Activated CD8-positive, alpha-beta T cell treated with anti-CD3 and anti-CD28 coated beads for 36 hours (primary cell): ENCODE measurements at regions of chr2 and their contacts with region 1.

Region 1: DNA sequence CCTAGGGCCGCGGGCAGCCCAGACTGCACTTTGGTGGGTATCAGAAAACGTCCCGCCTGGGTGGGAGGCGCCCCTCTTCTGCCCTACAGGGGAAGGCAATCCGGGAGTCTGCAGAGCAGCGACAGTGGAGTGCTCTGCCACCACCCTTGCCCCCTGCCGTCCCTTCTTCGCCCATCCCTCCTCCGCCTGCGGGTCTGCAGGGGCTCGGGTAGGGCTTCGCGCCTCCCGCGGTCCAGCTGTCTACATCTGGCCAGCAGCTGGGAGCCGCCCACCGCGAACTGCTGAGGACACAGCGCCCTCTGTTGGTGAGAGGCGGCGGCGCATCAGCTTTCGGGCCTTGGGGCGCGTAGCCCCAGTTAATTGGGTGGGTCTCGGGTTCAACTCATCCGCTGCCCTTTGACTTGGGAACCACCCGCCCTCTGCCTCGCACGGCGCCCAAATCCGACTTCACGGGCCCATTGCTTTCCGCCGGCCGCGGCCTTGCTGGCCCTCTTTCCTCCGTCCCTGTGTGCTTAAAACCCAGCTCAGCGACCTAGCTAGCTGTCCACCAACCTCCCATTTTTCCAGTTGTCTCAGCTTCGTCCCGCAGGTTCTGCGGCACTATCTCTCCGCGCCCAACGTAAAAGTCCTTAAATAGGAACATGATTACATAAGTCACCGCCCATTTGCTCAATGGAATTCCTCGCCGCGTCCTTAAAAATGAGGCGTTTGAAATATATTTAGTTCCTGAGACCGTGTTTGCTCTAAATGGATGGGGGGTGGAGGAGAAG is 17.6 kb downstream of the WNT10A start:
- DNase-seq: peak; percentile 90
- ATAC-seq: peak; percentile 26
- H3K4me3 Mint-ChIP-seq: peak overlapping the region; percentile 56
- H3K27ac Mint-ChIP-seq: peak overlapping the region; percentile 73
- H3K4me1 Mint-ChIP-seq: peaks cover 43% of the 10 kb centered on the region
- H3K27me3 Mint-ChIP-seq: peaks cover 33% of the 10 kb centered on the region
- CTCF ChIP-seq: peak; percentile 99

Region 2: DNA sequence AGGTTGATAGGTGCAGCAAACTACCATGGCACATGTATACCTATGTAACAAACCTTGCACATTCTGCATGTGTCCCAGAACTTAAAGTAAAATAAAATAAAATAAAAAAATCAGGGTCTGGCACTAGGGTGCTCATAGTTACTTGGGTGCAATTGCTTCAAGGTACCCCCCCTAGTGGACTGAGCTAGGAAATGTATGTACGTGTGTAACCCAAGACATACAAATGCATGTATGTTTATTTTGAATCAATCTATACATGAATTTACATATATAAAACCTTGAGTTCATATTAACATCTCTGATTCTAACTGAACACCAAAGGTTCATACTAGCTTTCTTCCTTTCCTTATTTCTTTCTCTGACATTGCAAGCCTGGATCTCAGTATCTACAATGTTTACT is 381.7 kb before region 1 on chr2:
- CTCF ChIA-PET with region 1: no interaction called
- POLR2A ChIA-PET with region 1: no interaction called
- intact Hi-C with region 1: no loop called
- DNase-seq: peak; percentile 20
- ATAC-seq: peak; percentile 56
- H3K4me3 Mint-ChIP-seq: no peak overlapping the region
- H3K27ac Mint-ChIP-seq: no peak overlapping the region
- H3K4me1 Mint-ChIP-seq: peaks cover 18% of the 10 kb centered on the region
- H3K27me3 Mint-ChIP-seq: no peaks in the 10 kb centered on the region
- CTCF ChIP-seq: peak; percentile 56

Region 3: DNA sequence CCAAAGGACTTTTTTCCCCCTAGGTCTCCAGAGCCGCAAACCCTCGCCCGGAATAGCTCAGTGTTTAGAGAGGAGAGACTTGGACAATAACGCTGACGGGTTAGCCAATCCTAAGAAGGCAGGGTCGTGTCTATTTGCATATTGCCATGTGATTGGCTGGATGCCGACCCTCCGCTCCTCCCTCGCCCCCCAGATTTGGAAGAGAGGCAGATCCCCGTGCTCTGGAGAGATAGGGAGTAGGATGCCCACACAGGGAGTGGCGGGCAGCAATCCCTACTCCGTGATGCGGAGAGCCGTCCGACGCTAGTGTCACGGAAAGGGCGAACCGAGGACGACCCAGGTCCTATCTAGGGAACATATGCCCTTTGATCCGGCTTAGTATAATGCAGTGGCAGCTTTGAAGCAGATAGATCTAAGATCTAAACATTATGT is 37.3 kb before region 1 on chr2:
- CTCF ChIA-PET with region 1: interaction called, 63 read pairs
- POLR2A ChIA-PET with region 1: interaction called, 5 read pairs
- intact Hi-C with region 1: no loop called
- DNase-seq: peak; percentile 21
- ATAC-seq: peak; percentile 35
- H3K4me3 Mint-ChIP-seq: no peak overlapping the region
- H3K27ac Mint-ChIP-seq: no peak overlapping the region
- H3K4me1 Mint-ChIP-seq: peaks cover 10% of the 10 kb centered on the region
- H3K27me3 Mint-ChIP-seq: peaks cover 68% of the 10 kb centered on the region
- CTCF ChIP-seq: no peak

Region 4: GRCh38 chr2:218876562-218877219 is 21.6 kb before region 1 on chr2:
- CTCF ChIA-PET with region 1: interaction called, 1,101 read pairs
- POLR2A ChIA-PET with region 1: interaction called, 284 read pairs
- intact Hi-C with region 1: loop called (anchors 1 kb)
- DNase-seq: peak; percentile 84
- ATAC-seq: no peak
- H3K4me3 Mint-ChIP-seq: no peak overlapping the region
- H3K27ac Mint-ChIP-seq: no peak overlapping the region
- H3K4me1 Mint-ChIP-seq: peaks cover 51% of the 10 kb centered on the region
- H3K27me3 Mint-ChIP-seq: peaks cover 42% of the 10 kb centered on the region
- CTCF ChIP-seq: peak; percentile 98

Region 5: GRCh38 chr2:218885981-218886947 is 12.0 kb before region 1 on chr2:
- CTCF ChIA-PET with region 1: interaction called, 1,101 read pairs
- POLR2A ChIA-PET with region 1: interaction called, 284 read pairs
- intact Hi-C with region 1: no loop called
- DNase-seq: no peak
- ATAC-seq: no peak
- H3K4me3 Mint-ChIP-seq: no peak overlapping the region
- H3K27ac Mint-ChIP-seq: peak overlapping the region; percentile 7
- H3K4me1 Mint-ChIP-seq: peaks cover 36% of the 10 kb centered on the region
- H3K27me3 Mint-ChIP-seq: peaks cover 12% of the 10 kb centered on the region
- CTCF ChIP-seq: no peak

Region 6: DNA sequence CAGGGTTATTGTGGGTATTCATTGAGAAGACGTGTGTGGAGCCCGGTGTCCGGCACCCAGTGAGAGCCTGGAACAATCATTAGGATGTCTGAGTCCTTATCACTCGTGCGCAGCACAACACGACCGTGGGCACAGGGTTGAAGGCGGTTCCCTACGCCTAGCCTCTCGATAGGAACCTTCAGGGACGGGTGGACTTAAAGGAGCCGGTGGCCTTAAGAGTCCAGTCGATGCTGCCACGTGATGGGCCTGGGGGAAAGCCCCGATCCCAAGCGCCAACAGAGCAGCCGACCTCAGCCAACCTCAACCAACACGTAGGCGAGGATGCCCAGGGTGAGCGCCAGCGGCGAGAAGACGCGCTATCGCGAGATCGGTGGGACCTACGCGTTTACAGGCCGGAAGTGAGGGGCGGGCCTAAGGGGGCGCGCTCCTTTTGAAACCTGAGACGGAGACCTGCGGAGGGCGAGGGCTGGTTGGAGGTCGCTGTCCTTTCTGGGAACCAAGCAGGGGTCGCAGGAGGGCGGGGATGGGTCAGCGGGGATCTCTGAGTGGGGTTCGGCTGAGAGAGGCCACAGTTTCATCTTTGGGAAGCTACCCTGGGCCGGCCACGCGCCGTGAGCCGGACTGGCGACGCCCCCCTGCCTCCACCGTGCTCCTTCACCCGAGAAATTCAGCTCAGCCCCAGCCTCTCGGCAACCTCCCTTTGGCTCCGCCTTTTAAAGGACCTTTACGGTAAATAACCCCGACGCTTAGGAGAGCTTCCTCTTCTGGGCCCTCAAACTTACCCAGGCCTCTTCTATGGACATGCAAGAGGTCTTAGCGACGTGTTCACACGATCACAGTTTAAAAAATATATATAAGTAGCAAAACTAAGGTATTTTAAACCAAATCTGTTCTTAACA is 10.7 kb after region 1 on chr2:
- CTCF ChIA-PET with region 1: interaction called, 85 read pairs
- POLR2A ChIA-PET with region 1: interaction called, 11 read pairs
- intact Hi-C with region 1: no loop called
- DNase-seq: peak; percentile 97
- ATAC-seq: peak; percentile 97
- H3K4me3 Mint-ChIP-seq: peak overlapping the region; percentile 87
- H3K27ac Mint-ChIP-seq: peak overlapping the region; percentile 88
- H3K4me1 Mint-ChIP-seq: peaks cover 9% of the 10 kb centered on the region
- H3K27me3 Mint-ChIP-seq: peaks cover 17% of the 10 kb centered on the region
- CTCF ChIP-seq: no peak

Region 7: DNA sequence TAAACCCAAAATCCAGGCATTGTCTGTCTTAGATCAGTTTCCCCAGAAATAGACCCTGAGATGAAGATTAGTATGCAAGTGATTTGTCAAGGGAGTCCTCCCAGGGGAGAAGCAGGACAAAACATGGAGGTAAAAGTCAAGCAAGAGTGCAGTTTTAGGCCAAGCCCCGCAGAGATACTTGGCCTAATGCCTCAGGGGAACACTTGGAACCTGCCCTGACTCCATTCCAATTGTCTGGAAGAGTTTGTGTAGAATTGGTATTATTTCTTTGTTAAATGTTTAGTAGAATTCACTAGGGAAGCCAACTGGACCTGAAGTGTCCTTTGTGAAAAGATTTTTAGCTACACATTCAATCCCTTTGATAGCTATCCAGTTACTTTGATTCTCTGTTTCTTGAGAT is 16.7 kb after region 1 on chr2:
- CTCF ChIA-PET with region 1: interaction called, 85 read pairs
- POLR2A ChIA-PET with region 1: interaction called, 3 read pairs
- intact Hi-C with region 1: no loop called
- DNase-seq: no peak
- ATAC-seq: no peak
- H3K4me3 Mint-ChIP-seq: no peak overlapping the region
- H3K27ac Mint-ChIP-seq: no peak overlapping the region
- H3K4me1 Mint-ChIP-seq: no peaks in the 10 kb centered on the region
- H3K27me3 Mint-ChIP-seq: peaks cover 15% of the 10 kb centered on the region
- CTCF ChIP-seq: no peak

Region 8: DNA sequence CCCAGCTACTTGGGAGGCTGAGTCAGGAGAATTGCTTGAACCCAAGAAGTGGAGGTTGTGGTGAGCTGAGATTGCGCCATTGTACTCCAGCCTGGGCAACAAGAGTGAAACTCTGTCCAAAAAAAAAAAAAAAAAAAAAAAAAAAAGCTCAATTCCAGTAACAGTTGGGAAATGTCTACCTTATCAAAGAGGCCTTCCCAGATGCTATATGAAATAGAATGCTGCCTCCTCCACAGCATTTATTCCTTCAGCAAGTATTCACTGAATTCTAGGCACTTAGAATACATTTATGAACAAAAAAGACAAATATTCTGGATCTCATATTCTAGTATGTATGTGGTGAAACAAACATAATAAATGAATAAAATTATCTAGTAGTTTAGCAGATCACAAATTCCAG is 48.3 kb after region 1 on chr2:
- CTCF ChIA-PET with region 1: no interaction called
- POLR2A ChIA-PET with region 1: no interaction called
- intact Hi-C with region 1: no loop called
- DNase-seq: no peak
- ATAC-seq: no peak
- H3K4me3 Mint-ChIP-seq: no peak overlapping the region
- H3K27ac Mint-ChIP-seq: no peak overlapping the region
- H3K4me1 Mint-ChIP-seq: no peaks in the 10 kb centered on the region
- H3K27me3 Mint-ChIP-seq: peaks cover 35% of the 10 kb centered on the region
- CTCF ChIP-seq: no peak

Region 9: GRCh38 chr2:218995972-218996711 is 97.8 kb after region 1 on chr2:
- CTCF ChIA-PET with region 1: interaction called, 13 read pairs
- POLR2A ChIA-PET with region 1: no interaction called
- intact Hi-C with region 1: no loop called
- DNase-seq: peak; percentile 90
- ATAC-seq: peak; percentile 91
- H3K4me3 Mint-ChIP-seq: no peak overlapping the region
- H3K27ac Mint-ChIP-seq: no peak overlapping the region
- H3K4me1 Mint-ChIP-seq: peaks cover 4% of the 10 kb centered on the region
- H3K27me3 Mint-ChIP-seq: peaks cover 75% of the 10 kb centered on the region
- CTCF ChIP-seq: peak; percentile 93